HAP-1 (cell line): ENCODE measurements at regions of chr5 and their contacts with region 1.

Region 1: GRCh38 chr5:56270568-56271392 is 37.6 kb upstream of the ANKRD55 start:
- DNase-seq: peak; percentile 61 to 84
- H3K4me3 ChIP-seq: no peak overlapping the region
- H3K4me1 ChIP-seq: no peaks in the 10 kb centered on the region
- H3K27me3 ChIP-seq: no peaks in the 10 kb centered on the region

Region 2: GRCh38 chr5:55429613-55430253 is 841.0 kb before region 1 on chr5:
- in situ Hi-C with region 1: no loop called
- DNase-seq: peak in 1 of 2 experiments; percentile 29
- H3K4me3 ChIP-seq: no peak overlapping the region
- H3K4me1 ChIP-seq: peaks cover 10% of the 10 kb centered on the region
- H3K27me3 ChIP-seq: no peaks in the 10 kb centered on the region

Region 3: DNA sequence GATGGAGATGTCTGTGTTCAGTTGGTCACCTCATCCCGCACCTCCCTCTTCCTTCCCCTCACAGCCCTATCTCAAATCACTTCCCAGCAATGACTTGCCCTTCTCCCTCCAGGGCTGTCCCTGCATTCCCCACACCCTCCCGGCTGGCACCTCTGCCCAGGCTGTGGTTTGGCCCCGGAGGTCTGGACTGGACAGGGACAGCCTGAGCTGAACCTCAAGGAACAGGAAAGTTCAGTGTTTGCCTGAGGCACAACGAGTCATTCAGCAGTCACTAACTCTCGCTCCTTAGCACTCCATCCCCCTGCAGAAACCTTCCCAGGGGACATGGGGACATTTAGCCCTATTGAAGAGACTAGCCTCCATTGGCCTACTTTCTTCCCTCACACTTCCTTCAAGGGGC is 486.3 kb after region 1 on chr5:
- in situ Hi-C with region 1: no loop called
- DNase-seq: no peak
- H3K4me3 ChIP-seq: no peak overlapping the region
- H3K4me1 ChIP-seq: peaks cover 2% of the 10 kb centered on the region; the same call in 1 of the 2 replicates
- H3K27me3 ChIP-seq: no peaks in the 10 kb centered on the region

Region 4: DNA sequence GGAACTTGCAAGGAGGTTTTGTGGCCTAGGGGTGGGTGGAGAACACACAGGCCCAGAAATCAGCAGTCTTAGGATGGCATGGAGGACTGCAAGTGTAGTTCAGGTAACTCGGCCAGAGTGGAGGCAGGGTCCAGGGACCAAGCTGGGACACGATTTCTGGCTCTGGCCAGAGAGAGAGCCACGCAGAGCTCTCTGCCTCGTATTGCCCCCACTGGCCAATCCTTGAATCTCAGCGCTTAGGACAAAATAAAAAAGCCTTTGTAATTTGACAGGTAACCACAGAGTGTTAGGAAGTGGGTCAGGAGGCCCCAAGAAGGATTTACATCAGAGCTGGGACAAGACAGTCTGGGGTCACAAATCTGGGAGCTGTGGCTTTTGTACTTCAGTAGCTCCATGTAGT is 556.3 kb after region 1 on chr5:
- in situ Hi-C with region 1: loop called (anchors 10 kb)
- DNase-seq: peak in 1 of 2 experiments; percentile 31
- H3K4me3 ChIP-seq: no peak overlapping the region
- H3K4me1 ChIP-seq: peaks cover 32% of the 10 kb centered on the region
- H3K27me3 ChIP-seq: no peaks in the 10 kb centered on the region

Region 5: GRCh38 chr5:57128325-57128724 is 857.5 kb after region 1 on chr5:
- in situ Hi-C with region 1: loop called (anchors 25 kb)
- DNase-seq: no peak
- H3K4me3 ChIP-seq: no peak overlapping the region
- H3K4me1 ChIP-seq: no peaks in the 10 kb centered on the region
- H3K27me3 ChIP-seq: no peaks in the 10 kb centered on the region

Region 6: GRCh38 chr5:57298295-57298984 is 1027.7 kb after region 1 on chr5:
- in situ Hi-C with region 1: loop called (anchors 25 kb)
- DNase-seq: peak; percentile 67 to 92
- H3K4me3 ChIP-seq: no peak overlapping the region
- H3K4me1 ChIP-seq: peaks cover 2% of the 10 kb centered on the region
- H3K27me3 ChIP-seq: no peaks in the 10 kb centered on the region